ENCODE measurements at regions of chr2 and their contacts with region 1.

Region 1: DNA sequence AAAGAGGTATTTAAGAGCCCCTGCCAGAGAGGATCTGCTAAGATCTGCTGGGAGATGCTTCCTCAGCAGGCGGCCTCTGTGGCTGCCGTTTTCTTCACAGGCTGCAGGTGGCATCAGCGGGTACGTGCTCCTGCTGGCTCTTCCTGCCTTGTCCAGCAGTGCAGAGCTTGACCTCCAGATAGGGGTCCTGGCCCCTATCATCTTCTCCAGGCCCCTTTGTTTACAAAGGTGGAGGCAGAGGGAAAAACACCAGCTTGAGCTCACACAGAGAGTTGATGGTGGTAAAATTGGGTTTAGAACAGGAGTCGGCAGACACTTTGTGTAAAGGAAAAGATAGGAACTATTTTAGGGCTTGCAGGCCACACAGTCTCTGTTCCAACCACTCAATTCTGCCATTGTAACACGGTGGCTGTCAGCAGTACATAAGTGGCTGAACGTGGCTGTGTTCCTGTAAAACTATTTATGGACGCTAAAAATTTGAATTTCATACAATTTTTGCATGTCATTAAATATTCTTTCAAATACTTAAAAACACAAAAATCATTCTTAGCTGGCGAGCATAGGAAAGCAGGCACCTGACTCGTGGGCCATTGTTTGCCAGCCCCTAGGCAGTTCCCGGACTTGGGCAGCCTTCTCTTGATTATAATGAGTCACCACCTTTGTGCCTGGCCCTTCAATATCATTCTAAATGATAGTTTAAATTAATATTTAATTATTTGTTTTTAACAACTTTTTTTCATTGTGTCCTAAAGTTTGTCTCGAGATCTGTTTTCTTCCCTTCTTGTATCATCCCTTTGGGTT is 98.2 kb upstream of the B3GNT7 start:
- DNase-seq: peak; percentile 58
- ATAC-seq: peak; percentile 74
- H3K4me3 Mint-ChIP-seq: no peak overlapping the region
- H3K27ac Mint-ChIP-seq: no peak overlapping the region
- H3K4me1 Mint-ChIP-seq: no peaks in the 10 kb centered on the region
- H3K27me3 Mint-ChIP-seq: no peaks in the 10 kb centered on the region

Region 2: GRCh38 chr2:231308631-231309428 is 11.5 kb after region 1 on chr2:
- CTCF ChIA-PET with region 1: no interaction called
- POLR2A ChIA-PET with region 1: no interaction called
- intact Hi-C with region 1: no loop called
- DNase-seq: no peak
- ATAC-seq: no peak
- H3K4me3 Mint-ChIP-seq: no peak overlapping the region
- H3K27ac Mint-ChIP-seq: no peak overlapping the region
- H3K4me1 Mint-ChIP-seq: no peaks in the 10 kb centered on the region
- H3K27me3 Mint-ChIP-seq: peaks cover 2% of the 10 kb centered on the region

Region 3: DNA sequence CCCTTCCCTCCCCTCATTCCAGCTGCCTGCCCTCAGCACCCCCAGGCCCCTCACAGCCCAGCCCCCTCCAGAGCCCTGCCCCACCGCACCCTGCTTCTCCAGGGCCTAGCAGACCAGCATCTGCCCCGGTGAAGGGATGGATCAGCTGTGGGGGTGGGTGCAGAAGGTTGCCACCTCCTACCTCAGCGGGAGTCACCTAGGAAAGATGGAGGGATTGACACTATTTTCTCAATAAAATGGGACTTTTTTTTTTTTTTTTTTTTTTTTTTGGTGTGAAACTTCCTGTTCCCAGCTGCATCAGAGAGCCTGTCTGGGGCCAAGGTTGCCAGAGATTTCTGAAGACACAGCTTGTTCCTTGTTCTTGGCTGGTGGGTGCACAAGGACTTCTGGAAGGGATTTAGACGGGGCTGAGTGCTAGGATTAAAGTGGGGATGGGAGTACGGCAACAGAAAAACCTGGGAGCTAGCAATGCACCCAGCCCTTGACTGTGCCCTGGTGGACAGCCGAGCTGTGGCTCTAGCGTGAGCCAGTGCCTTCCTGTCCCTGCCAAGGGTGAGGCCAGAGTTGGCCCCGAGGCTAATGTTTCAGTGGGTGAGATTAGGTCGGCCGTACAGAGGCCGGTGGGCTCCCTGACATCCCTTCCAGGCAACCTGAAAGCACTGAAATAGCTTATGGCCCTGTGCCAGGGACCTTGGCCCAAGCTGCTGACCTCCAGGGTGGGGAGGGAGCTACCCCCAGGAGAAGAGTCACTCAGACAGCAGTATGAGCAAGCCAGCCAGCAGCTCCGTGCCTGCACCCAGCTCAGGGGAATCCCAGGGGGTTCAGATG is 102.8 kb after region 1 on chr2:
- CTCF ChIA-PET with region 1: no interaction called
- POLR2A ChIA-PET with region 1: no interaction called
- intact Hi-C with region 1: loop called in 1 of 2 experiments (anchors 2 kb)
- DNase-seq: no peak
- ATAC-seq: no peak
- H3K4me3 Mint-ChIP-seq: no peak overlapping the region
- H3K27ac Mint-ChIP-seq: no peak overlapping the region
- H3K4me1 Mint-ChIP-seq: peaks cover 9% of the 10 kb centered on the region
- H3K27me3 Mint-ChIP-seq: peaks cover 8% of the 10 kb centered on the region

Region 4: DNA sequence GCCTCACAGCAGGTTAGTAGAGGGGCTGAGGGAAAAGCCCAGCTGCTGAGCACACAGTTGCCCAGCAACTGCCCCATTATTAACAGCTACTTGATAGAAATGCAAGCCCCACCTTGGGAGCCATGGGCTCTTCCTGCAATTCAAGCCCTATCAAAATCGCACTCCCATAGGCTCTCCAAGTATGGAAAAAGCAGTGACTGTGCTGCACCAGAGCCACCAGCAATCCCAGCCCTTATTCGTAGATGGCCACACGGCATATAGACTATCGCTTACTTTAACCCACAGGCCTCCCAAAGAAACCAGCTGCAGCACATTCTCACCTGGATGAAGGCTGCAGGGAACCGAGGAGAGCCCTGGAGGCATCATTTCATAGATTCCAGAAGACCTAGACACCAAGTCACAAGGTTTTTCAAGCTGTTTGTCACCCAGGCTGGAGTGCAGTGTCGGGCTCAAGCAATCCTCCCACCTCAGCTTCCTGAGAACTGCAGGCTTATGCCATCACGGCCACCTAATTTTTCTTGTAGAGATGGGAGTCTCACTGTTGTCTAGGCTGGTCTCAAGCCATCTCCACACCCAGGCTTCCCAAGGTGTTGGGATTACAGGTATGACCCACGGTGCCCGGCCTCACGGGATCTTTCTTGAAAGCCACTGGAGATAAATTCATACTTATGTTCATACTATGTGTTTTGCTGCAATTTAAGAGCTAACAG is 155.6 kb after region 1 on chr2:
- CTCF ChIA-PET with region 1: no interaction called
- POLR2A ChIA-PET with region 1: interaction called, 4 read pairs
- intact Hi-C with region 1: loop called in 1 of 2 experiments (anchors 2 kb)
- DNase-seq: peak; percentile 26
- ATAC-seq: peak; percentile 26
- H3K4me3 Mint-ChIP-seq: no peak overlapping the region
- H3K27ac Mint-ChIP-seq: no peak overlapping the region
- H3K4me1 Mint-ChIP-seq: peaks cover 18% of the 10 kb centered on the region
- H3K27me3 Mint-ChIP-seq: no peaks in the 10 kb centered on the region

Measured in activated CD4-positive, alpha-beta T cell treated with anti-CD3 and anti-CD28 coated beads for 36 hours (primary cell).